MCF 10A (cell line): ENCODE measurements at regions of chr5 and their contacts with region 1.

Region 1: DNA sequence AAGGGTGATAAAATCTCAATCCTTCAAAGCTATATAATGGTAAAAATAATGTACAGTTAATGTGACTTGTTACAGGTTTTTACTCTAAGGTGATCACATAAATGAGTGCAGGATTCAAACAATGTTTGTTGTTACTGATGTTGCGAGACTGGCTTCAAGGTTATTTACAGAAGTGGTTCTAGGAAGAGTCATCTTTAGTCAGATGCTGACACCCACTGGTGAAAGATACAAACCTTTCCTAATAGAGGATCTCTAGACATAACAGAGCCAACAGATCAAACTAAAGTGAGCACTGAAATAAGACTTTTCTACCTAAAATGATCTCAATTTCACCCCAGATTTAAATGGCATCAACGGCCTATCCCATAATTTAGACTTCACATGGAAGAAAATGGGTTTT is 20.2 kb downstream of the ARSB start:
- DNase-seq: peak; percentile 59
- H3K4me3 Mint-ChIP-seq: no peak overlapping the region
- H3K27ac Mint-ChIP-seq: no peak overlapping the region
- H3K4me1 Mint-ChIP-seq: no peaks in the 10 kb centered on the region
- H3K27me3 Mint-ChIP-seq: no peaks in the 10 kb centered on the region
- CTCF ChIP-seq: peak; percentile 53

Region 2: DNA sequence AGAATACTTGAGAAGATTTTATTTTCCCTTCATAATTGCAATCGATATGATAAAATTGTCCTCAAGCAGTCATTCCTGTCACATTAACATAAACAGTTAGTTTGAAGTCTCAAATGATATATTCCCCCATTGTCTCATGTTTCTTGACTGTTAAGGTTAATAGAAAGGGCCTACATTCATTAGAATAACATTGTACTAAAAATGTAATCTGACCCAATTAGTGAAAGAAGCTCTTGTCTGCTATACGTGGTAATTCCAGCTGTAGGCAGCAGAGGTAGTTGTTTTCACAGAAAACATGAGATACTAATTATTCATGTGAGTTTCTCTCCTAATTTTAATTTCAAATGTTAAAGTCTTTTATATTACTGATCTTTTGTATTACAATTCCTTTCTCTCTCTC is 644.5 kb before region 1 on chr5:
- CTCF ChIA-PET with region 1: interaction called, 16 read pairs
- POLR2A ChIA-PET with region 1: no interaction called
- intact Hi-C with region 1: loop called (anchors 1 kb)
- DNase-seq: peak; percentile 46
- H3K4me3 Mint-ChIP-seq: no peak overlapping the region
- H3K27ac Mint-ChIP-seq: no peak overlapping the region
- H3K4me1 Mint-ChIP-seq: peaks cover 6% of the 10 kb centered on the region
- H3K27me3 Mint-ChIP-seq: no peaks in the 10 kb centered on the region
- CTCF ChIP-seq: peak; percentile 70

Region 3: GRCh38 chr5:78467752-78468357 is 497.0 kb before region 1 on chr5:
- CTCF ChIA-PET with region 1: interaction called, 44 read pairs
- POLR2A ChIA-PET with region 1: interaction called, 3 read pairs
- intact Hi-C with region 1: loop called (anchors 1 kb)
- DNase-seq: peak; percentile 50
- H3K4me3 Mint-ChIP-seq: no peak overlapping the region
- H3K27ac Mint-ChIP-seq: no peak overlapping the region
- H3K4me1 Mint-ChIP-seq: peaks cover 5% of the 10 kb centered on the region
- H3K27me3 Mint-ChIP-seq: no peaks in the 10 kb centered on the region
- CTCF ChIP-seq: peak; percentile 70

Region 4: GRCh38 chr5:78537821-78538220 is 427.1 kb before region 1 on chr5:
- CTCF ChIA-PET with region 1: interaction called, 30 read pairs
- POLR2A ChIA-PET with region 1: no interaction called
- intact Hi-C with region 1: loop called (anchors 10 kb)
- DNase-seq: peak; percentile 45
- H3K4me3 Mint-ChIP-seq: no peak overlapping the region
- H3K27ac Mint-ChIP-seq: no peak overlapping the region
- H3K4me1 Mint-ChIP-seq: peaks cover 12% of the 10 kb centered on the region
- H3K27me3 Mint-ChIP-seq: no peaks in the 10 kb centered on the region
- CTCF ChIP-seq: peak; percentile 27

Region 5: DNA sequence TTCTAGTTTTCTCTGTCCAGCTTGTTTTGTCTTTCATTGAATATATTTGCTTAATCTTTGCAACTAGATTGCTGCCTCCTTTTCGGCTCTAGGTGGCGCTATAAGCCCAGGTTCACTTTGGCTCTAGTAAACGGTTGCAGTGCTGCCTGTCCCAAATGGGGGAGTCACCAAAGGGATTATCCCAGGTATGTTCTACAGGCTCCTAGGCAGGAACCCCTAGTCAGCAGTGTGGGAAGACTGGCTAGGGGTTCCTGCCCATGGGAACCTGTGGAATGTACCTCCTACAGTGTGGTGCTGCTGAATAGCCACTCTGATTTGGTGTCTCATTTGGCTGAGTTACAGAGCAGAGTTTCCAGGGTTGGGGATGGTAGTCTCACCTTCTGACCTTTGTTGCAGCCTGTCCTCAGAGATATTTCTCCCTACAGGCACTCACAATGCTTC is 64.9 kb before region 1 on chr5:
- CTCF ChIA-PET with region 1: interaction called, 3 read pairs
- POLR2A ChIA-PET with region 1: no interaction called
- intact Hi-C with region 1: loop called (anchors 2 kb)
- DNase-seq: peak; percentile 71
- H3K4me3 Mint-ChIP-seq: no peak overlapping the region
- H3K27ac Mint-ChIP-seq: no peak overlapping the region
- H3K4me1 Mint-ChIP-seq: no peaks in the 10 kb centered on the region
- H3K27me3 Mint-ChIP-seq: no peaks in the 10 kb centered on the region
- CTCF ChIP-seq: peak; percentile 68